Heart left ventricle (tissue), 16 donors: ENCODE measurements at regions of chr10 and their contacts with region 1.

Region 1: GRCh38 chr10:100286051-100287033 is at the start of gene BLOC1S2:
- DNase-seq: peak; percentile 86 to 94 (median 90)
- ATAC-seq: peak; percentile 90 to 98 (median 97)
- H3K4me3 ChIP-seq: peak within 1 kb of the TSS; percentile 72 to 95 (median 86)
- H3K27ac ChIP-seq: peak within 1 kb of the TSS; percentile 86 to 97 (median 91)
- H3K4me1 ChIP-seq: peaks cover 2 to 55% (median 28%) of the 10 kb centered on the region in 12 donors
- H3K27me3 ChIP-seq: no peaks in the 10 kb centered on the region
- CTCF ChIP-seq: peak in 2 of 12 donors; percentile 21 to 24
- POLR2A ChIP-seq: peak in 1 of 2 donors; percentile 81
- total RNA-seq, gene BLOC1S2: 14.6 to 32.0 (median 20.8) TPM

Region 2: DNA sequence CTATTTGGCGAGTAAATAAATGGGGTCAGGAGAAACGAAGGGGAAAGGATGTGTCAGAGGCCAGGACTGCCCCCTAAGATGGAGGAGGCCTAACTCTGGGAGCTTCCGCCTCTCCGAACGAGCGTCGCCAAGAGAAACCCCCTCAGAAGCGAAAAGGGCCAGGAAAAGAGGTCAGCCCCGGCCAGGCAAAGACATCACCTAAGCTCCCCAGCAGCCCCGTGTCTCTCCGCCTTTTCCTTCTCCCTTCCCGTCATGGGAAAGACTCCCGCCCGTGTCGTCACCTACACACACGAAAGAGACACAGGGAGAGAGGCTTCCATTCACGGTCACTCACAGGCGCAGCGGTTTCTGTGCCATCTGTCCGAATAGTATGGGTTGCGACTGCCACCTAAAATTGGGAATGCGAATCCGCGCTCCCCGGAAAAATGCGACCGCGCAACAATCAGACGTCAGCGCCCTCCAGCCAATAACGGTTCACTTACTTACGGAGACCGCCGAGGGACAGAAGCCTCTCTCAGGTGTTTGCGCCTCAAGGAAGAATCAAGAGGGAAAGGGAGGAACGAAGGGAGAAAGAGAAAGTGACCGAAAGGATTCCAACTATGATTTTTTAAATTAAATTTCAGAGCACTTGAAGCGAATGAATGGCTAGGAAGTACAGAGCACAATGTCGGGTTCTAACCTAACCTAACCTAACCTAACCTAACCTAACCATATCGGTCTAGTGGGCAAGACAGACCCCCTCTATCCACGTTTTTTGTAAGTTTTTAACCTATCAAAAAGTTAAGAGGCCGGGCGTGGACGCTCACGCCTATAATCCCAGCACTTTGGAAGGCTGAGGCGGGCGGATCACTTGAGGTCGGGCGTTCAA is 18.9 kb before region 1 on chr10 and contains the start of gene CWF19L1:
- intact Hi-C with region 1: loop called in 2 of 10 experiments (anchors 1 to 2 kb)
- DNase-seq: peak; percentile 87 to 91 (median 90)
- ATAC-seq: peak; percentile 90 to 98 (median 96)
- H3K4me3 ChIP-seq: peak within 1 kb of the TSS; percentile 66 to 99 (median 90)
- H3K27ac ChIP-seq: peak within 1 kb of the TSS; percentile 2 to 83 (median 74)
- H3K4me1 ChIP-seq: peaks cover 3 to 28% (median 14%) of the 10 kb centered on the region in 12 donors
- H3K27me3 ChIP-seq: no peaks in the 10 kb centered on the region
- CTCF ChIP-seq: no peak
- POLR2A ChIP-seq: peak in 1 of 2 donors; percentile 51
- total RNA-seq, gene CWF19L1: 11.1 to 17.3 (median 14.3) TPM

Region 3: GRCh38 chr10:100403734-100404133 is 117.4 kb after region 1 on chr10:
- intact Hi-C with region 1: no loop called
- DNase-seq: no peak
- ATAC-seq: no peak
- H3K4me3 ChIP-seq: no peak overlapping the region
- H3K27ac ChIP-seq: no peak overlapping the region
- H3K4me1 ChIP-seq: no peaks in the 10 kb centered on the region
- H3K27me3 ChIP-seq: no peaks in the 10 kb centered on the region
- CTCF ChIP-seq: no peak
- POLR2A ChIP-seq: no peak